ENCODE measurements at regions of chr9 and their contacts with region 1.

Region 1: GRCh38 chr9:126704873-126705766 is 91.4 kb downstream of the LMX1B start:
- DNase-seq: peak; percentile 94
- ATAC-seq: peak; percentile 43
- H3K4me3 Mint-ChIP-seq: peak overlapping the region; percentile 49
- H3K27ac Mint-ChIP-seq: no peak overlapping the region
- H3K4me1 Mint-ChIP-seq: peaks cover 17% of the 10 kb centered on the region
- H3K27me3 Mint-ChIP-seq: peaks cover 62% of the 10 kb centered on the region
- CTCF ChIP-seq: peak; percentile 78

Region 2: DNA sequence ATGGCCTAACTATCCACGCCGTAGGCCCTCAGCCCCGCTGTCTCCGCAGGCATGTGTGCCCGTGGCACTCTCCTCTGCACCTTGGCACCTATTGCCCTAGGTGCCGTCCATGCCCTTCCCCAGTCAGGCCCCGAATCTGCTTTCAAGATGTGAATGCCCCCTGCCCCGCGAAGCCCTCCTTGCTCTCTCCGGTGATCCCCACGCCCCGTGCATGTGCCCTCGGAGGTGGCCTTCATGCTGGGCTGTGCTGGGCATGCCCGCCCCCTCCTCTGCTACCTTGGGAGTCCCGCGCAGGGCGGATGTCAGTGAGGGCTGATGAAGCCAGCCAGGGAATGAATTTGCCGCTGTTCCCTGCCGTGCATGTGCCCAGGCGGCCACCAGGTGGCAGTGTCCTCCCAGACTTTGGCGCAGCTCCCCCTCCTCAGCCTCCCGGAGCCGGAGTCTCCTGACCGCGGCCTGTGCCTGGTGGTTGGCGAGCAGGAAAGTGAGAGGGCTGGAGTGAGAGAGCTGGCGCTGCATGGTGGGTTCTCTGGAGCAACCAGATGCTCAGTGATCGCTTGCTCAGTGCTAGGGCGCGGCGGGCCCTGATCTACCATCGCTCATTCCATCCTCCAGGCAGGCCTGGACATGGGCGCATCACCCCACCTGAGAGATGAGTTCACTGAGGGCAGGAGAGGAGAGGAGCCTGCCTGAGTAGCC is 204.3 kb before region 1 on chr9:
- CTCF ChIA-PET with region 1: interaction called, 34 read pairs
- POLR2A ChIA-PET with region 1: no interaction called
- DNase-seq: peak; percentile 92
- ATAC-seq: peak; percentile 78
- H3K4me3 Mint-ChIP-seq: peak overlapping the region; percentile 77
- H3K27ac Mint-ChIP-seq: no peak overlapping the region
- H3K4me1 Mint-ChIP-seq: peaks cover 13% of the 10 kb centered on the region
- H3K27me3 Mint-ChIP-seq: peaks cover 12% of the 10 kb centered on the region
- CTCF ChIP-seq: peak; percentile 97

Region 3: DNA sequence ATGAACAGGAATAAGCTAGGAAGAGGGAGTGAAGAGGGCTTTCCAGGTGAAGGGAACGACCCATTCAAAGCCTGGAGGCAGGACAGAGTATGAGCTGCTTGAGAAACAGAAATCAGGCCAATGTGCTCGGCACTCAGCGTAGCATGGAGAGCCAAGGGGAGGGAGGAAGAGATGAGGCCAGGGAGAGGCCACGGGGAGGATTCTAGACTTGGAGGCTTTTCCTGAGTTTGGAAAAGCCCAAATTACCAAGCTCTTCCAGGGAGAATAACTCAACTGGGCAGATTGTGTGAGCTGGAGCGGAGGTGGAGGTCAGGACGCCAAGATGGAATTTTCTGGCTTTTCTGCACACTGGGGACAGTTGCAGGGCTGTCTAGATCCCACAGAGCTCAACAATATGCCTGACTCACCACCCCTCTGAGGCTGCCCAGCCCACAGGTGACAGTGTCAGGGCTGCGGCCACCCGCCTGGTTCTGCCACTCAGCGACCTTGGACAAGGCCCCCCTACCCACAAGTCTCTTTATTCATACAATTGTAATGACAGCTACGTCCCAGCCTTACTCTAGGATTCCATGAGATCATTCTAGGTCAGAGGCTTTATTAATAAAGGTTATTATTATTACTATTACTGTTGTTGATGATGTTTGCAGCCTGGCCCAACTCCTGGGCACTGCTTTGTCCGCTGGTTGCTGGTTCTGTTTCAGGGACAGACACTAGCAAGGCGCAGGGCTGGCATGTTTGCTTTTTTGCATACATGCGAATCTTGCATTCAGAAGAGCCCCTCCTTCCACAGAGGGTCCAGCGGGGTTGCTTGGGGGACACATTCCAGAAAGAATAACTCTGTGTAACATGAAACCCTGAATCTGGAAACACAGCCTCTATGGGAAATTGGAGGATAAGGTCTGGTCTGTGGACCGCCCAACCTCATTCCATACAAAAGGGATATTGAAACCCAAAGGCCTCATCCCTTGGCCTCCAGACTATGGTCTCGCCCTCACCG is 100.8 kb before region 1 on chr9:
- CTCF ChIA-PET with region 1: interaction called, 17 read pairs
- POLR2A ChIA-PET with region 1: no interaction called
- DNase-seq: no peak
- ATAC-seq: no peak
- H3K4me3 Mint-ChIP-seq: no peak overlapping the region
- H3K27ac Mint-ChIP-seq: 0 out of 2 replicates have a peak overlapping the region, but pooled peaks have one; percentile 6
- H3K4me1 Mint-ChIP-seq: no peaks in the 10 kb centered on the region
- H3K27me3 Mint-ChIP-seq: peaks cover 39% of the 10 kb centered on the region
- CTCF ChIP-seq: no peak

Region 4: GRCh38 chr9:126642842-126643241 is 62.3 kb before region 1 on chr9:
- CTCF ChIA-PET with region 1: interaction called, 30 read pairs
- POLR2A ChIA-PET with region 1: no interaction called
- DNase-seq: no peak
- ATAC-seq: no peak
- H3K4me3 Mint-ChIP-seq: no peak overlapping the region
- H3K27ac Mint-ChIP-seq: no peak overlapping the region
- H3K4me1 Mint-ChIP-seq: peaks cover 33% of the 10 kb centered on the region
- H3K27me3 Mint-ChIP-seq: peaks cover 60% of the 10 kb centered on the region
- CTCF ChIP-seq: no peak

Region 5: DNA sequence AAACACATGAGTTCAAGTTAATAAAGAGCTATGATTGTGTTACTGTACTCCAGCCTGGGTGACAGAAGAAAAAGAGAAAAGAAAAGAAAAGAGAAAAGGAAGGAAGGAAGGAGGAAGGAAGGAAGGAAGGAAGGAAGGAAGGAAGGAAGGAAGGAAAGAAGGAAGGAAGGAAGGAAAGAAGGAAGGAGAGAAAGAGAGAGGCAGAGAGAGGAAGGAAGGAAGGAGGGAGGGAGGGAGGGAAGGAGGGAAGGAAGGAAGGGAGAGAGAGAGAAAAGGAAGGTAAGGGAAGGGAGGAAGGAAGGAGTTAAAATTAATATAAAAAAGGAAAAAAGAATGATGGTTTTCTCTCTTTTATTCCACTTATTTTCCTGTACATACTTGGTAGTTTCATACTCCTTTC is 10.3 kb after region 1 on chr9:
- CTCF ChIA-PET with region 1: interaction called, 60 read pairs
- POLR2A ChIA-PET with region 1: no interaction called
- DNase-seq: no peak
- ATAC-seq: no peak
- H3K4me3 Mint-ChIP-seq: no peak overlapping the region
- H3K27ac Mint-ChIP-seq: no peak overlapping the region
- H3K4me1 Mint-ChIP-seq: peaks cover 20% of the 10 kb centered on the region
- H3K27me3 Mint-ChIP-seq: peaks cover 21% of the 10 kb centered on the region
- CTCF ChIP-seq: no peak

Region 6: DNA sequence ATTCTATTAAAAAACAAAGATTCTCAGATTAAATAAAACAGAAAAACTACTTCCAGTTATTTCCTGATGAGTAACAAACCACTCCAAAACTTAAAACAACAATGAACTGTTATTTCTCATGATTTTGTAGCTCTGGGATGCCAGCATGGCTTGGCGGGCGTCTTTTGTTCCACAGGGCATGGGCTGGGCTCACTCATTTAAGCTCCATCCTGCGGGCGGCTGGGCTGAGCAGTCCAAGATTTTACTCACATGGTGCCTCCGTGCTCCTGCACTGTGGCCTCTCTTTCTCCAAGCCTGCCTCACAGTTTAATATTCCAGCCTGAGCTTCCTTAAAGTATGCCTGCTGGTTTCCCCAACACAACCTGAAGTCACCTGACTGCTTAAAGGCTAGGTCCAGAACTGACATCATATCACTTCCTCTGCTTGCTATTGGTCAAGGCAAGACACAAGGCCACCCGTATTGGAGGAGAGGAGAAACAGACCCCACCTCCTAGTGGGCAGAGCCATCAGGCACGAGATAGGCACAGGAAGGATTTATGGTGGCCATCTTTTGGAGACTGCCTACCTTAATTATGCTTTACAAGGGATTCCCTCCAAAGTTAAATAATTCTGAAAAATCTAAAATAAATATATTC is 58.1 kb after region 1 on chr9:
- CTCF ChIA-PET with region 1: interaction called, 40 read pairs
- POLR2A ChIA-PET with region 1: no interaction called
- DNase-seq: no peak
- ATAC-seq: peak; percentile 90
- H3K4me3 Mint-ChIP-seq: no peak overlapping the region
- H3K27ac Mint-ChIP-seq: no peak overlapping the region
- H3K4me1 Mint-ChIP-seq: no peaks in the 10 kb centered on the region
- H3K27me3 Mint-ChIP-seq: peaks cover 6% of the 10 kb centered on the region; the same call in 1 of the 2 replicates
- CTCF ChIP-seq: no peak

Region 7: DNA sequence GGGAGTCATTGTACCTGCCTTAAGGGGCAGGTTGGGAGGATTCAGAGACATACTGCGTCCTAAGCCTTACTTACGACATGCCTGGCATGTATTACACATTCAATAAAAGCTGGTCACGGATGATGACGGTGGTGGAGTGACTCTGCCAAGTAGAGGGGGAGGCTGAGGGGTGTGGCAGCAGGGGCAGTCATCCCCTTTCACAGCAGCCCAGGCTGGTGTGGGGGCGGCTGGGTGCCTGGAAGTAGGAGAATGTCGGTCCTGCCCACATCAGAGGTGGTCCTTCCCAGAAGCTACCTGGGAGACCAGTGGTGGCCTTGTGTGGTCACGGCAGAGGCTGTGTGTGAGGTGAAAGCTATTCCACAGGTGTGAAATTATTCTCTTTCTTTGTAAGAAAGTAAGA is 164.2 kb after region 1 on chr9:
- CTCF ChIA-PET with region 1: no interaction called
- POLR2A ChIA-PET with region 1: no interaction called
- DNase-seq: no peak
- ATAC-seq: no peak
- H3K4me3 Mint-ChIP-seq: no peak overlapping the region
- H3K27ac Mint-ChIP-seq: peak overlapping the region; percentile 60; the same call in 1 of the 2 replicates
- H3K4me1 Mint-ChIP-seq: peaks cover 22% of the 10 kb centered on the region
- H3K27me3 Mint-ChIP-seq: no peaks in the 10 kb centered on the region
- CTCF ChIP-seq: no peak